HCT116 (cell line): ENCODE measurements at regions of chr6 and their contacts with region 1.

Region 1: GRCh38 chr6:161218222-161218621 is 55.6 kb downstream of the AGPAT4 start:
- DNase-seq: no peak
- ATAC-seq: no peak
- H3K4me3 ChIP-seq: no peak overlapping the region
- H3K27ac ChIP-seq: no peak overlapping the region
- H3K4me1 ChIP-seq: no peaks in the 10 kb centered on the region
- H3K27me3 ChIP-seq: no peaks in the 10 kb centered on the region
- CTCF ChIP-seq: no peak
- POLR2A ChIP-seq: no peak
- RAD21 ChIP-seq: peak; percentile 20; the same call in 1 of the 2 replicates

Region 2: GRCh38 chr6:161162722-161163121 is 55.5 kb before region 1 on chr6:
- CTCF ChIA-PET with region 1: no interaction called
- POLR2A ChIA-PET with region 1: no interaction called
- RAD21 ChIA-PET with region 1: no interaction called
- intact Hi-C with region 1: loop called (anchors 1 kb)
- DNase-seq: no peak
- ATAC-seq: no peak
- H3K4me3 ChIP-seq: no peak overlapping the region
- H3K27ac ChIP-seq: no peak overlapping the region
- H3K4me1 ChIP-seq: peaks cover 0 to 2% of the 10 kb centered on the region in 2 experiments; a peak in 1 of 4 replicates
- H3K27me3 ChIP-seq: no peaks in the 10 kb centered on the region
- CTCF ChIP-seq: no peak
- POLR2A ChIP-seq: no peak
- RAD21 ChIP-seq: no peak